SK-N-SH (cell line): ENCODE measurements at regions of chr17 and their contacts with region 1.

Region 1: GRCh38 chr17:55421179-55421934 is at the start of gene MMD:
- DNase-seq: peak; percentile 86
- H3K4me3 ChIP-seq: peak within 1 kb of the TSS; percentile 90 to 96
- H3K27ac ChIP-seq: peak within 1 kb of the TSS; percentile 47 to 90
- H3K4me1 ChIP-seq: peaks cover 6 to 8% of the 10 kb centered on the region in 2 experiments; a peak in 3 of 4 replicates
- H3K27me3 ChIP-seq: peaks cover 17% of the 10 kb centered on the region; the same call in 1 of the 2 replicates
- CTCF ChIP-seq: no peak
- EP300 ChIP-seq: no peak
- RAD21 ChIP-seq: no peak
- polyA plus RNA-seq, gene MMD: 10.9 and 11.7 TPM in 2 replicates

Region 2: DNA sequence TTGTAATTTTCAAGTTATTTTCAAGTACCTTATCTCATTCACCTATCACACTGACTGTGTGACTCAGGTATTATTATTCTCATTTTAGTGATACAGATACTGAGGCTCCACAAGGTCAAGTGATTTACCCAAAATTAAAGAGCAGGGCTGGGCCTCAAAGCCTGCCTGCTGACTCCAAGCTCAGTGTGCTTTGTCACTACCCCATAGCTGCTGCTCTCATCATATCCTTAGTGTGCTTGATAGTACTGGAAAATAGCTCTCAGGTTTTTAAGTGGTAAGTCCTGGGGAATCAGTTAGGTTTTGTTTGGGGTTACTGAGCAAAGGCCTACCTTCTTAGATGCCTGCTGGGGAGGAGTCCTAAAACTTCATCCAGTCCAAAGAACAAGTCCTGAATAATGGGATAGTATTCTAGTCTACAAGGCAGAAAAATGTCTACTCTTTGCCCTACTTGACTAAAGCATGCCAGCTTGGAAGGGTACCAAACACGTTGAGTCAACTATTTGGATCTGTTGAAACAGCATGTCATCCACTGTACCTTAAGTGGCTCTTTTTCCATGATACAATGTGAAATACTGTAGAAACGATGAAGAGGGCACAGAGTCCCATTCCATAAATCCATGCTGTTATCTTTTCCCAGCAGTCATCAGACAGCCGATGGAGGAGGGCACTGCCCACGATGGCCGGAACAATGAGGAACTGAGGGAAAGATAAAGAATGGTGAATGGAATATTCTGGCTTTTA is 10.5 kb before region 1 on chr17:
- CTCF ChIA-PET with region 1: interaction called, 13 read pairs
- POLR2A ChIA-PET with region 1: interaction called, 7 read pairs
- DNase-seq: peak; percentile 53
- H3K4me3 ChIP-seq: no peak overlapping the region
- H3K27ac ChIP-seq: peak overlapping the region; percentile 0 to 96; a peak in 3 of 4 replicates
- H3K4me1 ChIP-seq: peaks cover 0 to 18% of the 10 kb centered on the region in 2 experiments; a peak in 2 of 4 replicates
- H3K27me3 ChIP-seq: no peaks in the 10 kb centered on the region
- CTCF ChIP-seq: no peak
- EP300 ChIP-seq: no peak
- RAD21 ChIP-seq: no peak; the same call in 1 of the 2 replicates